CD4-positive, alpha-beta memory T cell (primary cell): ENCODE measurements at regions of chr1 and their contacts with region 1.

Region 1: DNA sequence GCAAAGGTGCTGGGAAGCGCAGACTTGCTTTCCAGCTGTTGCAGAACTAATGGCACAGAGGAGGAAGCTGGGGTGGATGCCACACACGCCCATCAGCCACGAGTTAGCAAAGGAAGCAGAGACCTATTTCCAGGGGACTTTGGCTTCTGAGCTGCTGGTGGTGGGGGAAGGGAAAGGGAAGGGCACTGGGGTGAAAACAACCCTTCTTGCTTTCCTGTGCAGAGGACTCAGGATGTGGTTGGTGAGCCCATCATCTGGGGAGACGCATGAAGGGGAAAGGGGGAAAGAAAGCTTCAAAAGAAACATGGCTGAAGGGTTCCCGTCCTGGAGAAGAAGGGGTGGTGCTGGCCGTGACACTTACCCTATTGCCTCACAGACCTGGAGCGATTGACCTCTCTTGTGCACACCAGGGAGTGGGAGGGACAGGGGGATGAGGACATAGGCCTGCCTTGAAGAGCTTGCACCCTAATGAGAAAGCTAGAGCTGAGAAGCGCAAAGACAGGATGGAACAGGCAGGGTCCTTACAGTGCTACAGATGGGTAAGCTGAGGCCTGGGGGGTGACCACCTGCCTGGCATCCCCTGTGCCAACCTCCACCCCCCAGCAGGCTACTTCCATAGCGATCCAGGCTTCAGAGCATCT is 140.8 kb upstream of the RAB4A start:
- DNase-seq: peak in 4 of 5 donors; percentile 31 to 54 (median 52)
- H3K4me3 ChIP-seq: peak overlapping the region in 1 of 2 donors; percentile 22
- H3K4me3 Mint-ChIP-seq: peak overlapping the region in 7 of 8 donors; percentile 43 to 85 (median 67)
- H3K27ac ChIP-seq: no peak overlapping the region
- H3K27ac Mint-ChIP-seq: peak overlapping the region; percentile 15 to 94 (median 73)
- H3K4me1 ChIP-seq: peaks cover 56% of the 10 kb centered on the region
- H3K4me1 Mint-ChIP-seq: peaks cover 47 to 75% (median 54%) of the 10 kb centered on the region in 4 donors
- H3K27me3 ChIP-seq: no peaks in the 10 kb centered on the region
- H3K27me3 Mint-ChIP-seq: no peaks in the 10 kb centered on the region

Region 2: DNA sequence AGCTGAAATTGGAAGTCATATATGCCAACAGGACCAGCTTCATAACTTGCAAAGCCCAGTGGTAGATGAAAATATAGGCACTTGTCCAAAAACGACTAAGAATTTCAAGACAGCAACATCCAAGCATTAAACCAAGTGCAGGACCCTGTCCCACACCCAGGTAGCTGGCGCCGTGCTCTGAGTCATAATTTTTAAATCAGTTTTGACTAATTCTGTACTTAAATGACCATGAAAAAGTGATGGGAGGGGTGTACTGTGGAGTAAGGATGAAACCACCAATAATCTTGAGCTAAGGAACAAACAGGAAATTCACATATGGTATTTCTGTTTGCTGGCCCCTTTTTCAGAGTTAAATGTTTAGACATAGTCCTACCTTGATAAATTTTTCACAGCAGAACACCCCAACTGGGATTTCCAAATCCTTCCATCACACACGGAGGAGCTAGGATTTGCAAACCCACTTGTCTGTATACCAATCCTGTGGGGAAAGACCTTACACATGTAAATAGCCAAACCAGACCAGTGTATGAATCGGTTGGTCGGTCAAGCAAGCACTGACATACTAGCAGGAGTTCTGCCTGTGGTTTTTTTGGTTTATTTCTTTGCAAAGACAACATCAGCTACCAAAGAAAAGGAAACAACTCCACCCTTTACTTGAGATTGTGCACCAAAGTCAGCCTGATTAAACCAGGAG is 94.9 kb before region 1 on chr1:
- CTCF ChIA-PET with region 1: interaction called, 3 read pairs
- POLR2A ChIA-PET with region 1: interaction called, 12 read pairs
- intact Hi-C with region 1: no loop called
- DNase-seq: peak in 2 of 5 donors; percentile 15 to 23
- H3K4me3 ChIP-seq: no peak overlapping the region
- H3K4me3 Mint-ChIP-seq: peak overlapping the region; percentile 26 to 87 (median 75)
- H3K27ac ChIP-seq: no peak overlapping the region
- H3K27ac Mint-ChIP-seq: peak overlapping the region; percentile 69 to 92 (median 85)
- H3K4me1 ChIP-seq: peaks cover 76% of the 10 kb centered on the region
- H3K4me1 Mint-ChIP-seq: peaks cover 59 to 85% (median 70%) of the 10 kb centered on the region in 4 donors
- H3K27me3 ChIP-seq: no peaks in the 10 kb centered on the region
- H3K27me3 Mint-ChIP-seq: peaks cover 0 to 6% of the 10 kb centered on the region in 2 donors

Region 3: GRCh38 chr1:229087339-229087738 is 42.8 kb before region 1 on chr1:
- CTCF ChIA-PET with region 1: no interaction called
- POLR2A ChIA-PET with region 1: no interaction called
- intact Hi-C with region 1: no loop called
- DNase-seq: no peak
- H3K4me3 ChIP-seq: no peak overlapping the region
- H3K4me3 Mint-ChIP-seq: no peak overlapping the region
- H3K27ac ChIP-seq: no peak overlapping the region
- H3K27ac Mint-ChIP-seq: no peak overlapping the region
- H3K4me1 ChIP-seq: no peaks in the 10 kb centered on the region
- H3K4me1 Mint-ChIP-seq: peaks cover 0 to 4% (median under 1%) of the 10 kb centered on the region in 4 donors
- H3K27me3 ChIP-seq: no peaks in the 10 kb centered on the region
- H3K27me3 Mint-ChIP-seq: peaks cover 0 to 3% of the 10 kb centered on the region in 2 donors